ENCODE measurements at regions of chr4 and their contacts with region 1.

Region 1: GRCh38 chr4:27000820-27001219 is 140.2 kb downstream of the STIM2 start:
- DNase-seq: no peak
- ATAC-seq: peak in 1 of 2 donors; percentile 44
- H3K4me3 ChIP-seq: no peak overlapping the region
- H3K27ac ChIP-seq: no peak overlapping the region
- H3K4me1 ChIP-seq: peaks cover 5% of the 10 kb centered on the region
- H3K27me3 ChIP-seq: no peaks in the 10 kb centered on the region
- CTCF ChIP-seq: no peak

Region 2: DNA sequence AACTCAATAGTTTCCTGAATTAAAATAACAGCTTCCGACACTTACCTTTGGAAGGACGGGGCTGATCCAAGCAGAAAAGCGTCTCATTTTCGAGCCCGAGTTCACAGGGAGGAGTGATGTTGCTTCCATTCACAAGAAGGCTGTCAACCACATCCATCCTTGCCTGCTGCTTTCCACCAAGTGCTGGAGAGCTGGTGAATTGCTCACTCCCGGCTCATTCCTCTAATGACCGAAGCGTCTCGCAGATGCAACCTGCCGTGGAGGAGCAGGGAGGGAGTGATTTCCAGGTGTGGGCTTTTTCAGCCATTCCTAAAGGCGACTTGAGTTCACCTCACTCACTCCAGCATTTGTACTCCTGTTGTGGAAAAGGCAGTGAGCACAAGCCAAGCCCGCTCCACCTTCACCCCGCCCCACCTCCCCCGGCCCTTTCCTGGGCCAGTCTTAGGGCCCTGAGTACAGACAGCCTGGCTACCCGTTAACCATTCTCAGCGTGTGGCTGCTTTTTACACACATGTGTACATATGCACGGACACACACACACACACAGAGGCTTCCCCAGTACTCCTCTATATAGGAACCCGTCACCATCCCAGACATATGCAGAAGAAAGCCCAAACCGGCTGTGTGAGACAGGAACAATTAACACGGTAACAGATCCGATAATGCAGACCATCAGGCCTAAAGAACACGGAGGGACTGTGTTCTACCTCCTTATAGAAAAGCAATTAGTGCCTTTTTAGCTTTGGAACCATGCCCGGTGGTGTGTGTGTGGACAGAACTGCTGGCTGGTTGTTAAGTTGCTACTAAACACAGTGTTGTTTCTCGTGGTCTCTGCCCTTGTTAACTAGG is 510.5 kb before region 1 on chr4 and contains the start of gene CCKAR:
- intact Hi-C with region 1: no loop called
- DNase-seq: no peak
- ATAC-seq: no peak
- H3K4me3 ChIP-seq: no peak within 1 kb of the TSS
- H3K27ac ChIP-seq: no peak within 1 kb of the TSS
- H3K4me1 ChIP-seq: no peaks in the 10 kb centered on the region
- H3K27me3 ChIP-seq: no peaks in the 10 kb centered on the region
- CTCF ChIP-seq: no peak
- total RNA-seq, gene CCKAR: not detected

Region 3: GRCh38 chr4:26860157-26860921 is 140.5 kb before region 1 on chr4 and contains the start of gene STIM2:
- intact Hi-C with region 1: loop called (anchors 10 kb)
- DNase-seq: peak; percentile 97
- ATAC-seq: peak; percentile 84 to 94
- H3K4me3 ChIP-seq: peak within 1 kb of the TSS; percentile 79
- H3K27ac ChIP-seq: peak within 1 kb of the TSS; percentile 97
- H3K4me1 ChIP-seq: peaks cover 55% of the 10 kb centered on the region
- H3K27me3 ChIP-seq: no peaks in the 10 kb centered on the region
- CTCF ChIP-seq: peak; percentile 41
- total RNA-seq, gene STIM2: 43.9 TPM

Region 4: DNA sequence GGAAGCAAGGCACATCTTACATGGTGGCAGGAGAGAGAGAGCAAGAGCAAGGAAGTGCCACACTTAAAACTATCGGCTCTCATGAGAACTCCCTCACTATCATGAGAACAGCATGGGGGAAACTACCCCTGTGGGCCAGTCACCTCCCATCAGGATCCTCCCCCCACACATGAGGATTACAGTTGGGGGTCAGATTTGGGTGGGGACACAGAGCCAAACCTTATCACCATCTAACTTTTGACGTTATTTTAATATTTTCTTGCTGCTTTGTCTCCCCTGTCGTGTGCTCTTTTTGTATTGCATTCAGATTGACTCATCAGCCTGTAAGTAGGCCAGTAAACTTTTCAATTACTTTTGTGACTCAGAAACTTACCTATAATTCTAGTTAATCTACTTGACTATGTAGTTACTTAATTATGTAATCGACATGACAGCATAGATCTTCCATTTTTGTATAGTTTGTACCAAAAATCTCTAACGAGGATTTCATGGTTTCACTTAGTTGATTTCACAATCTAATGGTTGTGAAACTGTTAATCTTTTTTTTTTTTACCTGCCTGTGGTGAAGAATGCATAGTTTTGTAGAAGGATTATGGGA is 121.9 kb before region 1 on chr4:
- intact Hi-C with region 1: no loop called
- DNase-seq: no peak
- ATAC-seq: peak in 1 of 2 donors; percentile 84
- H3K4me3 ChIP-seq: no peak overlapping the region
- H3K27ac ChIP-seq: peak overlapping the region; percentile 28
- H3K4me1 ChIP-seq: peaks cover 3% of the 10 kb centered on the region
- H3K27me3 ChIP-seq: no peaks in the 10 kb centered on the region
- CTCF ChIP-seq: no peak

Region 5: GRCh38 chr4:27176400-27176799 is 175.6 kb after region 1 on chr4:
- intact Hi-C with region 1: no loop called
- DNase-seq: no peak
- ATAC-seq: peak in 1 of 2 donors; percentile 61
- H3K4me3 ChIP-seq: no peak overlapping the region
- H3K27ac ChIP-seq: no peak overlapping the region
- H3K4me1 ChIP-seq: no peaks in the 10 kb centered on the region
- H3K27me3 ChIP-seq: no peaks in the 10 kb centered on the region
- CTCF ChIP-seq: peak; percentile 28

Region 6: GRCh38 chr4:27239641-27240040 is 238.8 kb after region 1 on chr4:
- intact Hi-C with region 1: no loop called
- DNase-seq: no peak
- ATAC-seq: no peak
- H3K4me3 ChIP-seq: no peak overlapping the region
- H3K27ac ChIP-seq: no peak overlapping the region
- H3K4me1 ChIP-seq: no peaks in the 10 kb centered on the region
- H3K27me3 ChIP-seq: no peaks in the 10 kb centered on the region
- CTCF ChIP-seq: no peak